A549 (cell line): ENCODE measurements at regions of chr1 and their contacts with region 1.

Region 1: GRCh38 chr1:93615582-93616150 is 66.0 kb downstream of the BCAR3 start:
- DNase-seq: peak; percentile 48 to 69
- ATAC-seq: peak in 1 of 2 experiments; percentile 16; a peak in 2 of 6 replicates
- H3K4me3 ChIP-seq: peak overlapping the region; percentile 5; the same call in 1 of the 3 replicates
- H3K27ac ChIP-seq: peak overlapping the region; percentile 99
- H3K4me1 ChIP-seq: peaks cover 84% of the 10 kb centered on the region
- CTCF ChIP-seq: no peak
- EP300 ChIP-seq: no peak
- POLR2A ChIP-seq: no peak
- RAD21 ChIP-seq: no peak

Region 2: GRCh38 chr1:93533677-93534076 is 82.0 kb before region 1 on chr1:
- CTCF ChIA-PET with region 1: no interaction called
- POLR2A ChIA-PET with region 1: no interaction called
- DNase-seq: no peak
- ATAC-seq: no peak
- H3K4me3 ChIP-seq: no peak overlapping the region
- H3K27ac ChIP-seq: no peak overlapping the region
- H3K4me1 ChIP-seq: peaks cover 6% of the 10 kb centered on the region; the same call in 1 of the 3 replicates
- CTCF ChIP-seq: no peak
- EP300 ChIP-seq: no peak
- POLR2A ChIP-seq: no peak
- RAD21 ChIP-seq: no peak

Region 3: GRCh38 chr1:93846211-93846991 is 230.7 kb after region 1 on chr1:
- CTCF ChIA-PET with region 1: interaction called, 15 read pairs
- POLR2A ChIA-PET with region 1: interaction called, 5 read pairs
- DNase-seq: peak; percentile 68 to 82
- ATAC-seq: peak; percentile 74 to 83
- H3K4me3 ChIP-seq: peak overlapping the region; percentile 58
- H3K27ac ChIP-seq: peak overlapping the region; percentile 84 to 95
- H3K4me1 ChIP-seq: peaks cover 19% of the 10 kb centered on the region
- CTCF ChIP-seq: no peak
- EP300 ChIP-seq: no peak
- POLR2A ChIP-seq: peak; percentile 36
- RAD21 ChIP-seq: no peak; a peak in 1 of 5 replicates